B cell (primary cell): ENCODE measurements at regions of chr9 and their contacts with region 1.

Region 1: GRCh38 chr9:121121582-121122087 is 46.9 kb downstream of the CNTRL start:
- DNase-seq: peak; percentile 95
- ATAC-seq: peak; percentile 100
- H3K4me3 ChIP-seq: peak overlapping the region; percentile 44 to 78 (median 65)
- H3K4me3 Mint-ChIP-seq: peak overlapping the region; percentile 86
- H3K27ac ChIP-seq: peak overlapping the region; percentile 52 to 75
- H3K27ac Mint-ChIP-seq: peak overlapping the region; percentile 90
- H3K4me1 ChIP-seq: peaks cover 11 to 19% of the 10 kb centered on the region in 2 donors
- H3K4me1 Mint-ChIP-seq: peaks cover 42% of the 10 kb centered on the region
- H3K27me3 ChIP-seq: no peaks in the 10 kb centered on the region
- H3K27me3 Mint-ChIP-seq: no peaks in the 10 kb centered on the region
- CTCF ChIP-seq: peak; percentile 28

Region 2: GRCh38 chr9:120842690-120843499 is 278.7 kb before region 1 on chr9 and contains the start of gene PSMD5:
- CTCF ChIA-PET with region 1: no interaction called
- POLR2A ChIA-PET with region 1: no interaction called
- intact Hi-C with region 1: loop called (anchors 5 kb)
- DNase-seq: peak; percentile 96
- ATAC-seq: peak; percentile 98
- H3K4me3 ChIP-seq: peak within 1 kb of the TSS; percentile 68 to 99 (median 82)
- H3K4me3 Mint-ChIP-seq: peak within 1 kb of the TSS; percentile 90
- H3K27ac ChIP-seq: peak within 1 kb of the TSS; percentile 89
- H3K27ac Mint-ChIP-seq: peak within 1 kb of the TSS; percentile 95
- H3K4me1 ChIP-seq: peaks cover 21 to 23% of the 10 kb centered on the region in 2 donors
- H3K4me1 Mint-ChIP-seq: peaks cover 27% of the 10 kb centered on the region
- H3K27me3 ChIP-seq: no peaks in the 10 kb centered on the region
- H3K27me3 Mint-ChIP-seq: no peaks in the 10 kb centered on the region
- CTCF ChIP-seq: no peak
- total RNA-seq, gene PSMD5: 25.3 and 26.8 TPM in 2 replicates

Region 3: GRCh38 chr9:120985810-120986222 is 135.8 kb before region 1 on chr9:
- CTCF ChIA-PET with region 1: interaction called, 13 read pairs
- POLR2A ChIA-PET with region 1: no interaction called
- intact Hi-C with region 1: loop called (anchors 5 kb)
- DNase-seq: peak; percentile 26
- ATAC-seq: no peak
- H3K4me3 ChIP-seq: no peak overlapping the region
- H3K4me3 Mint-ChIP-seq: no peak overlapping the region
- H3K27ac ChIP-seq: no peak overlapping the region
- H3K27ac Mint-ChIP-seq: no peak overlapping the region
- H3K4me1 ChIP-seq: peaks cover 0 to 3% of the 10 kb centered on the region in 2 donors
- H3K4me1 Mint-ChIP-seq: peaks cover 4% of the 10 kb centered on the region
- H3K27me3 ChIP-seq: no peaks in the 10 kb centered on the region
- H3K27me3 Mint-ChIP-seq: no peaks in the 10 kb centered on the region
- CTCF ChIP-seq: no peak

Region 4: DNA sequence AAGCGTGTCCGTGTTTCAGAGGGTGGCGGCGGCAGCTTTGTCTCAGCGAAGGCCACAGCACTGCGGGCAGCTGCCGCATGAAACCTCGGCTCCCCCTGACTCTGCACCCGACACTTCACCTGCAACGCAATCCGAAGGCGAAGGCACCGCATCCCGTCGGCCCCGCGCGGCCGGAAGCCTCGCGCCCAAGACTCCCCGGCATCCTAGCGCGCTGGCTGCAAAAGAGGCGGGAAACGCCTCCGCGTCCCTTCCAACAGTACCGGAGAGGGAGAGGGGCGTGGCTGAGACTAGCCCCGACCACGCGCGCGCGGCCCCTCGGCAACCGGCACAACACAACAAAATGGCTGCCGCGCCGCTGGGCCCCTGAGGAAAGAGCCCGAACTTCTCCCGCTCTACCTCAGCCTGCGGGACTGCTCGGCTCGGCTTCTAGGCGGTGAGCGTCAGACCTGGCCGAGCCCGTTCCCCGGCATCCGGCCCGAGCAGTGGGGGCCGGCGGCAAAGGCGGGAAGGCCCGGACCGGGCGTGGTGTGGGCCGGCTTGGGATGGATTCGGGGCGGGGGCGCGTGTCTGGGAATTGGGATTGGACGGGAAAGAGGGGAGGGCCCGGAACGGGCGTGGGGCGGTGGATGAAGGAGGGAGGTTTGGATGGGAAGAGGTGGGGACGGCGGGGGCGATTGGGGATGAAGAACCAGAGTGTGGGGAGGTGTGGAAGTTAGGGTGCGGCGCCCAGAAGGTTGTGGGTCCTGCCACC is 46.8 kb before region 1 on chr9 and contains the start of gene CNTRL:
- CTCF ChIA-PET with region 1: interaction called, 6 read pairs
- POLR2A ChIA-PET with region 1: interaction called, 6 read pairs
- intact Hi-C with region 1: loop called (anchors 1 kb)
- DNase-seq: peak; percentile 85
- ATAC-seq: peak; percentile 72
- H3K4me3 ChIP-seq: peak within 1 kb of the TSS; percentile 80 to 99 (median 92)
- H3K4me3 Mint-ChIP-seq: peak within 1 kb of the TSS; percentile 100
- H3K27ac ChIP-seq: peak within 1 kb of the TSS; percentile 86 to 99
- H3K27ac Mint-ChIP-seq: peak within 1 kb of the TSS; percentile 94
- H3K4me1 ChIP-seq: peaks cover 42 to 49% of the 10 kb centered on the region in 2 donors
- H3K4me1 Mint-ChIP-seq: peaks cover 64% of the 10 kb centered on the region
- H3K27me3 ChIP-seq: no peaks in the 10 kb centered on the region
- H3K27me3 Mint-ChIP-seq: no peaks in the 10 kb centered on the region
- CTCF ChIP-seq: no peak
- total RNA-seq, gene CNTRL: 146 and 150 TPM in 2 replicates

Region 5: DNA sequence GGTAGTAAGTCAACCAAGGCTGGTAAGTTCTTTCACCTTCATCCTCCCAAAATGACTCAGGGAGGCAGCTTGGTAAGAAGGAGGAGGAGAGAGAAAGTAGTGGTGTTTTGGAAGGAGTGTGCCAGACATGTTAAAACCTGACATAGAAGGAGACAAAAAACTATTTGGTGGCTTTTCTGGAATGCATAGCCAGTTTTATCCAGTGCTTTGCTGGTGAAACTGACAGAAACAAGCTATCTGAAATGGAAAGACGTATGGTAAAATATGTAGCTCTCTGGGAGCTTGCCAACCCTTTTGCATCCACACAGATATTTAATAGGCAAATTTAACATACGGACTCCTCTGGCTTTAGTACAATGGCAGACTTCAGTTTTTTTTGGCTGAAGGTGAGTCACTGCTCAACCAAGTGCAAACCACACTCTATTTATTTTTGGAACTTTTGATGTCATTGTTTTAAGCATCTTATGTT is 34.7 kb after region 1 on chr9:
- CTCF ChIA-PET with region 1: interaction called, 5 read pairs
- POLR2A ChIA-PET with region 1: interaction called, 3 read pairs
- intact Hi-C with region 1: loop called (anchors 2 kb)
- DNase-seq: peak; percentile 74
- ATAC-seq: peak; percentile 89
- H3K4me3 ChIP-seq: peak overlapping the region in 1 of 5 experiments; percentile 28
- H3K4me3 Mint-ChIP-seq: peak overlapping the region; percentile 76
- H3K27ac ChIP-seq: peak overlapping the region; percentile 61 to 88
- H3K27ac Mint-ChIP-seq: peak overlapping the region; percentile 95
- H3K4me1 ChIP-seq: peaks cover 47 to 50% of the 10 kb centered on the region in 2 donors
- H3K4me1 Mint-ChIP-seq: peaks cover 64% of the 10 kb centered on the region
- H3K27me3 ChIP-seq: no peaks in the 10 kb centered on the region
- H3K27me3 Mint-ChIP-seq: no peaks in the 10 kb centered on the region
- CTCF ChIP-seq: no peak